Activated CD4-positive, alpha-beta memory T cell treated with anti-CD3 and anti-CD28 coated beads for 36 hours (primary cell): ENCODE measurements at regions of chr12 and their contacts with region 1.

Region 1: DNA sequence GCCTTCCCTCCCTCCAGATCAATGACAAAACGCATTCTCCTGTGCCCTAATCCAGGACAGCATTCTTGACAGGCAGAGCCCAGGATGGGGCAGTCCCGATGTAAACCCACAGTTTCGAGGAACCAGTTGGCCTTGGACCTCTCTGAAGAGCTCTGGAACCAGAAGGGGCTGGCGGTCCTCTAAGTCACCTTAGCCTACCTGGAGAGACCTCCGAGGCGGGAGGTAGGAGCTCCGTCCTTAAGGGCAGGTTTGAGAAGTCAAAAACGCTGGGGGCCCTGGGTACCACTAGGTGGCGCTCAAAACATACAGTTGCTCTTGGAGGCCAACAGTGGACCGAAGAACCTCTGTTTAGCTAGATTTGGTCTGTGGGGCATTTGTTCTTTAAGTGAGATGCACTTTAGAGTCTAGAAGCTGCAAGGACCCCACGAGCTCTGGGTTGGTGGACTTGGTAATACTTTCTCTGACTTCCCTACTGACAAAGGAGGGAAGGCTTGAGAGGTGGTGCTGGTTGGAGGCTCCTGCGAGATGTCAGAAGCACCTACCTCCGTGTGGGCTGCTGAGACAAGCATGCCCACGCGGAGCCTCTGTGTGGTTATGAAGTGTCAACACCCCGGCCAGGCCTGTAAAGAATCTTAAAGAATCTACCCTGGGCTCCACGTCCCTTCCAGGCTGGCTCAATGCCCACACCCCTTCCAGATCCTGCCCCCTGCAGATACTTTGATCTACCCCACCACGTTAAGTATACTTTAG is 74.8 kb upstream of the CHST11 start:
- DNase-seq: peak; percentile 87
- H3K4me3 Mint-ChIP-seq: no peak overlapping the region
- H3K27ac Mint-ChIP-seq: no peak overlapping the region
- H3K4me1 Mint-ChIP-seq: peaks cover 15% of the 10 kb centered on the region
- H3K27me3 Mint-ChIP-seq: peaks cover 3% of the 10 kb centered on the region

Region 2: GRCh38 chr12:104569346-104570173 is 187.7 kb after region 1 on chr12:
- CTCF ChIA-PET with region 1: interaction called, 11 read pairs
- POLR2A ChIA-PET with region 1: no interaction called
- intact Hi-C with region 1: no loop called
- DNase-seq: peak; percentile 70
- H3K4me3 Mint-ChIP-seq: peak overlapping the region; percentile 1
- H3K27ac Mint-ChIP-seq: peak overlapping the region; percentile 46
- H3K4me1 Mint-ChIP-seq: peaks cover 62% of the 10 kb centered on the region
- H3K27me3 Mint-ChIP-seq: no peaks in the 10 kb centered on the region

Region 3: GRCh38 chr12:104680066-104680465 is 298.2 kb after region 1 on chr12:
- CTCF ChIA-PET with region 1: interaction called, 4 read pairs
- POLR2A ChIA-PET with region 1: no interaction called
- intact Hi-C with region 1: loop called (anchors 2 kb)
- DNase-seq: peak; percentile 58
- H3K4me3 Mint-ChIP-seq: no peak overlapping the region
- H3K27ac Mint-ChIP-seq: peak overlapping the region; percentile 75
- H3K4me1 Mint-ChIP-seq: peaks cover 74% of the 10 kb centered on the region
- H3K27me3 Mint-ChIP-seq: no peaks in the 10 kb centered on the region

Region 4: GRCh38 chr12:104769144-104769561 is 387.2 kb after region 1 on chr12:
- CTCF ChIA-PET with region 1: interaction called, 10 read pairs
- POLR2A ChIA-PET with region 1: no interaction called
- intact Hi-C with region 1: no loop called
- DNase-seq: no peak
- H3K4me3 Mint-ChIP-seq: no peak overlapping the region
- H3K27ac Mint-ChIP-seq: no peak overlapping the region
- H3K4me1 Mint-ChIP-seq: peaks cover 13% of the 10 kb centered on the region
- H3K27me3 Mint-ChIP-seq: no peaks in the 10 kb centered on the region

Region 5: GRCh38 chr12:104834607-104835006 is 452.7 kb after region 1 on chr12:
- CTCF ChIA-PET with region 1: interaction called, 11 read pairs
- POLR2A ChIA-PET with region 1: no interaction called
- intact Hi-C with region 1: loop called (anchors 5 kb)
- DNase-seq: no peak
- H3K4me3 Mint-ChIP-seq: no peak overlapping the region
- H3K27ac Mint-ChIP-seq: no peak overlapping the region
- H3K4me1 Mint-ChIP-seq: no peaks in the 10 kb centered on the region
- H3K27me3 Mint-ChIP-seq: no peaks in the 10 kb centered on the region

Region 6: GRCh38 chr12:104958009-104958945 is 576.4 kb after region 1 on chr12 and contains the start of gene SLC41A2:
- CTCF ChIA-PET with region 1: interaction called, 4 read pairs
- POLR2A ChIA-PET with region 1: no interaction called
- intact Hi-C with region 1: loop called (anchors 5 kb)
- DNase-seq: peak; percentile 88
- H3K4me3 Mint-ChIP-seq: peak within 1 kb of the TSS; percentile 86
- H3K27ac Mint-ChIP-seq: peak within 1 kb of the TSS; percentile 77
- H3K4me1 Mint-ChIP-seq: peaks cover 25% of the 10 kb centered on the region
- H3K27me3 Mint-ChIP-seq: peaks cover 3% of the 10 kb centered on the region
- total RNA-seq, gene SLC41A2: 7.6 to 7.7 TPM